Thyroid gland (tissue), 4 donors: ENCODE measurements at regions of chr5 and their contacts with region 1.

Region 1: GRCh38 chr5:178288381-178289368 is 56.1 kb upstream of the PHYKPL start:
- DNase-seq: peak; percentile 83 to 87
- H3K4me3 ChIP-seq: no peak overlapping the region
- H3K27ac ChIP-seq: peak overlapping the region; percentile 85 to 96 (median 90)
- H3K4me1 ChIP-seq: peaks cover 58 to 72% of the 10 kb centered on the region in 2 donors
- H3K27me3 ChIP-seq: no peaks in the 10 kb centered on the region
- CTCF ChIP-seq: no peak
- POLR2A ChIP-seq: peak in 1 of 2 donors; percentile 0

Region 2: GRCh38 chr5:178324481-178325310 is 36.0 kb after region 1 on chr5:
- intact Hi-C with region 1: loop called (anchors 5 kb)
- DNase-seq: peak; percentile 88 to 90
- H3K4me3 ChIP-seq: no peak overlapping the region
- H3K27ac ChIP-seq: peak overlapping the region; percentile 90 to 96 (median 95)
- H3K4me1 ChIP-seq: peaks cover 46 to 56% of the 10 kb centered on the region in 2 donors
- H3K27me3 ChIP-seq: no peaks in the 10 kb centered on the region
- CTCF ChIP-seq: no peak
- POLR2A ChIP-seq: peak in 1 of 2 donors; percentile 42

Region 3: GRCh38 chr5:178372142-178372571 is 83.5 kb after region 1 on chr5:
- intact Hi-C with region 1: no loop called
- DNase-seq: peak; percentile 51 to 53
- H3K4me3 ChIP-seq: no peak overlapping the region
- H3K27ac ChIP-seq: peak overlapping the region; percentile 18 to 78 (median 72)
- H3K4me1 ChIP-seq: peaks cover 8 to 10% of the 10 kb centered on the region in 2 donors
- H3K27me3 ChIP-seq: no peaks in the 10 kb centered on the region
- CTCF ChIP-seq: no peak
- POLR2A ChIP-seq: no peak